Right ventricle myocardium inferior (tissue), 1 donor: ENCODE measurements at regions of chr1 and their contacts with region 1.

Region 1: DNA sequence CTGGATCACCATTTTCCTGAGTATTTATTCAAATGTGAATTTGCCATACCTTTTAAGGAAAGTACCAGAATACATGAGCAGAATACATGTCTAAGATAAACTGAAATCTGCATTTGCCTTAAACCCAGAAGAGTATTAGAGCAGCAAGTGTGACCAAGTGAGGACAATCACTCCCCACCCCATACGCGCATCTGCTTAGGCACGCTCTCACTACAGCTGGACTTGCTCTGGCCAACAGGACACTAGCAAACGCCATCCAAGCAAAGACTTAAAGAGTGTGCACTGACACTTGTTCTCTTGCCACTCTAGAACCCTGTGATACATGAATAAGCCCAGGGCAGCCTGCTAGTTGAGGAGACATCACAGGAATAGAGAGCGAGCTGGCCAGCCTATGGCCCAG is 25.6 kb downstream of the NUP133 start:
- DNase-seq: no peak
- ATAC-seq: no peak

Region 2: GRCh38 chr1:229370601-229371021 is 111.9 kb before region 1 on chr1:
- intact Hi-C with region 1: loop called (anchors 2 kb)
- DNase-seq: no peak
- ATAC-seq: peak; percentile 93